Heart right ventricle (tissue), 16 donors: ENCODE measurements at regions of chr2 and their contacts with region 1.

Region 1: GRCh38 chr2:145166731-145167302 is 646.9 kb upstream of the ZEB2 start:
- DNase-seq: no peak
- ATAC-seq: no peak
- H3K4me3 ChIP-seq: no peak overlapping the region
- H3K27ac ChIP-seq: no peak overlapping the region
- H3K4me1 ChIP-seq: no peaks in the 10 kb centered on the region
- H3K27me3 ChIP-seq: no peaks in the 10 kb centered on the region
- CTCF ChIP-seq: no peak

Region 2: GRCh38 chr2:145007093-145007959 is 159.5 kb before region 1 on chr2:
- intact Hi-C with region 1: loop called in 1 of 10 experiments (anchors 10 kb)
- DNase-seq: peak; percentile 25 to 66
- ATAC-seq: peak; percentile 68 to 91 (median 82)
- H3K4me3 ChIP-seq: no peak overlapping the region
- H3K27ac ChIP-seq: peak overlapping the region in 8 of 10 donors; percentile 31 to 75 (median 63)
- H3K4me1 ChIP-seq: peaks cover 0 to 23% (median 6%) of the 10 kb centered on the region in 9 donors
- H3K27me3 ChIP-seq: no peaks in the 10 kb centered on the region
- CTCF ChIP-seq: no peak

Region 3: GRCh38 chr2:145043399-145043834 is 123.4 kb before region 1 on chr2:
- intact Hi-C with region 1: no loop called
- DNase-seq: no peak
- ATAC-seq: no peak
- H3K4me3 ChIP-seq: no peak overlapping the region
- H3K27ac ChIP-seq: no peak overlapping the region
- H3K4me1 ChIP-seq: peaks cover 0 to 3% (median 0%) of the 10 kb centered on the region in 9 donors
- H3K27me3 ChIP-seq: no peaks in the 10 kb centered on the region
- CTCF ChIP-seq: peak in 1 of 9 donors; percentile 11

Region 4: GRCh38 chr2:145123606-145124005 is 43.2 kb before region 1 on chr2:
- intact Hi-C with region 1: no loop called
- DNase-seq: peak; percentile 40 to 57
- ATAC-seq: peak in 5 of 8 donors; percentile 27 to 78 (median 42)
- H3K4me3 ChIP-seq: no peak overlapping the region
- H3K27ac ChIP-seq: no peak overlapping the region
- H3K4me1 ChIP-seq: no peaks in the 10 kb centered on the region
- H3K27me3 ChIP-seq: no peaks in the 10 kb centered on the region
- CTCF ChIP-seq: no peak